A673 (cell line): ENCODE measurements at regions of chr4 and their contacts with region 1.

Region 1: GRCh38 chr4:76677571-76678326 is 220.2 kb downstream of the SOWAHB start:
- DNase-seq: peak; percentile 40
- H3K4me3 ChIP-seq: no peak overlapping the region
- H3K27ac ChIP-seq: peak overlapping the region; percentile 46
- H3K4me1 ChIP-seq: no peaks in the 10 kb centered on the region
- H3K27me3 ChIP-seq: no peaks in the 10 kb centered on the region
- CTCF ChIP-seq: no peak

Region 2: DNA sequence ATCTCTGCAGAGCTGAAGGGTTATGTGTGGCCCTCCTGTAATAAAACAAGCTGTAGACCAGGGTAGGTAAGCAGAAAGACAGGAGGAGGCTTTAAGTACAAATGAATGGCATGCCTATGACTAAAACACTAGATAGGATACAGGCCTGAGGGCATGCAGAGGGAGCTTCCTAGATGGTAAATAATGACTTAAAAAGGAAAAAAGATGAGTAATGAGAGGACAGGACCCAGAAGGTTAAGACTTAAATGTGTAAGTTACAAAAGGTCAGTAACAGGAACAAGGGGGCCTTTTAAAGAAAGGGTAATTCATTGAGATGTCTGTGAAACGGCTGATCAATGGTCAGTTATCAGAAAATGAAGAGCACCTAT is 25.4 kb after region 1 on chr4:
- CTCF ChIA-PET with region 1: interaction called, 10 read pairs
- POLR2A ChIA-PET with region 1: no interaction called
- intact Hi-C with region 1: no loop called
- DNase-seq: no peak
- H3K4me3 ChIP-seq: no peak overlapping the region
- H3K27ac ChIP-seq: no peak overlapping the region
- H3K4me1 ChIP-seq: peaks cover 12% of the 10 kb centered on the region
- H3K27me3 ChIP-seq: no peaks in the 10 kb centered on the region
- CTCF ChIP-seq: no peak